Activated CD4-positive, alpha-beta T cell treated with anti-CD3 and anti-CD28 coated beads for 36 hours (primary cell): ENCODE measurements at regions of chr5 and their contacts with region 1.

Region 1: GRCh38 chr5:150846654-150847333 is 473 bp downstream of the IRGM start:
- DNase-seq: peak; percentile 82
- ATAC-seq: peak; percentile 94
- H3K4me3 Mint-ChIP-seq: peak overlapping the region; percentile 67
- H3K27ac Mint-ChIP-seq: peak overlapping the region; percentile 93
- H3K4me1 Mint-ChIP-seq: peaks cover 22% of the 10 kb centered on the region
- H3K27me3 Mint-ChIP-seq: no peaks in the 10 kb centered on the region

Region 2: DNA sequence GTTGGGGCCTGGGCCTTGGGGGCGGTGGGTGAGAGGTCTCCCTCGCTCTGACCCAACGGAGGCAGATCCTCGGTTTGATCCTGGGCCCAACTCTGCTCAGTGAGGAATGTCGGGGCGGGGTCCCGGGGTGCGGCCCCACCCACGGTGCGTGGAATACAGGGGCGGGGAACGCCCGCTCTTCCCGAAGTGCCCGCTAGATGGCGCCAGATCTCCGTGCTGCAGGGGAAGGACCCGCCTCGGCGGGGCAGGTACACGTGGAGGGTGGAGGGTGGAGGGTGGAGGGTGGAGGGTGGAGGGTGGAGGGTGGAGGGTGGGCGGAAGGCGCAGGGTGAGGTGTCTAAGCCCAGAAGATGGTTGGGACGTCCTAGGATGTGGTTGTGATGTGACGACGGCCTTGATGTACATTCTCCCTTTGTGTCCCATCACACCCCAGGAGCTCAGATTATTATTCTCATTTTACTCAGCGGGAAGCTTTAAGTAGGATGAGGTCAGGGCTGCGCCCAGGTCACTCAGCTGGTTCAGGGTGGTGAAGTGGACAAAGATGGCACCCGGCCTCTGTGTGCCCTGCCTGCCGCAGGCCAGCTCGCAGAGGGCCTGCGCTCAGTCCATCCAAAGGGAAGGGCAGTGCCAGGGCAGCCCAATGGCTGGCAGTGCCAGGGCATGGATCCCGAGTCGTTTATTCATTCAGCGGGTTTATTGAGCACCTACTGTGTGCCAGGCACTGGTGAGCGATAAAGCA is 387.8 kb before region 1 on chr5:
- CTCF ChIA-PET with region 1: interaction called, 3 read pairs
- POLR2A ChIA-PET with region 1: no interaction called
- intact Hi-C with region 1: loop called (anchors 1 kb)
- DNase-seq: peak; percentile 93
- ATAC-seq: peak; percentile 87
- H3K4me3 Mint-ChIP-seq: peak overlapping the region; percentile 49
- H3K27ac Mint-ChIP-seq: peak overlapping the region; percentile 52
- H3K4me1 Mint-ChIP-seq: peaks cover 28% of the 10 kb centered on the region
- H3K27me3 Mint-ChIP-seq: no peaks in the 10 kb centered on the region

Region 3: DNA sequence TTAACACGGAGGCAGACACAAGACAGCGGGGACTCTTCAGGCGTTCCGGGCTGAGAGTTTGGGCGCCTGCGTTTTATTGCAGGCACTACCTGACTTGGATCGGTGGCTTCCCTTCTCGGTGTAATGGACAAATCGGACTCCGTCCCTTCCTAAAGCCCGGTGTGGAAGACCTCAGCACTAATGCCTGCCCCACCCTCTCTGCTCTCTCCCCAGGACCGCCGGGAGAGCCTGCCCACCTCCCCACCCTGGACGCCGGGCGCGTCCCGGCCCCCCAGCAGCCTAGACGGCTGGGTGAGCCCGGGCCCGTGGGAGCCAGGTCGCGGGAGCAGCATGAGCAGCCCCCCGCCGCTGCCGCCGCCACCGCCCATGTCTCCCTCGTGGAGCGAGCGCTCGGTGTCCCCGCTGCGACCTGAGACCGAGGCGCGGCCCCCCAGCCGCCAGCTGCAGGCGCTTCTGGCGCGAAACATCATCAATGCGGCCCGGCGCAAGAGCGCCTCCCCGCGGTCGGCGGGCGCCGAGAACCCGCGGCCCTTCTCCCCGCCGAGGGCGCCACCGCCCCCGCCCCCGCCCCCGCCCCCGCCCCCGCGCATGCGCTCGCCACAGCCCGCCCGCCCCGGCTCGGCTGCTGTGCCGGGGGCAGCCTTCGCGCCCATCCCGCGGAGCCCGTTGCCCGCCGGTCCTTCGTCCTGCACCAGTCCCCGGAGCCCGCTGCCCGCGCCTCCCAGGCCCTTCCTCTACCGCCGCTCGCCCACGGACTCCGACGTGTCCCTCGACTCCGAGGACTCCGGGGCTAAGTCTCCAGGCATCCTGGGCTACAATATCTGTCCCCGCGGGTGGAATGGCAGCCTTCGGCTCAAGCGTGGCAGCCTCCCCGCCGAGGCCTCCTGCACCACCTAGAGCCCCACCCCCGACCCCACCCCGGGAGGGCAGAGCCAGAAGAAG is 190.3 kb before region 1 on chr5:
- CTCF ChIA-PET with region 1: interaction called, 4 read pairs
- POLR2A ChIA-PET with region 1: no interaction called
- intact Hi-C with region 1: loop called (anchors 1 to 5 kb)
- DNase-seq: peak; percentile 82
- ATAC-seq: peak; percentile 82
- H3K4me3 Mint-ChIP-seq: peak overlapping the region; percentile 63
- H3K27ac Mint-ChIP-seq: no peak overlapping the region
- H3K4me1 Mint-ChIP-seq: no peaks in the 10 kb centered on the region
- H3K27me3 Mint-ChIP-seq: no peaks in the 10 kb centered on the region

Region 4: GRCh38 chr5:150758531-150759333 is 88.1 kb before region 1 on chr5 and contains the start of gene DCTN4:
- CTCF ChIA-PET with region 1: interaction called, 8 read pairs
- POLR2A ChIA-PET with region 1: interaction called, 8 read pairs
- intact Hi-C with region 1: loop called (anchors 1 kb)
- DNase-seq: peak; percentile 96
- ATAC-seq: peak; percentile 96
- H3K4me3 Mint-ChIP-seq: no peak within 1 kb of the TSS
- H3K27ac Mint-ChIP-seq: no peak within 1 kb of the TSS
- H3K4me1 Mint-ChIP-seq: peaks cover 37% of the 10 kb centered on the region
- H3K27me3 Mint-ChIP-seq: no peaks in the 10 kb centered on the region
- total RNA-seq, gene DCTN4: 31.7 to 49.0 TPM

Region 5: GRCh38 chr5:150801117-150801927 is 45.5 kb before region 1 on chr5:
- CTCF ChIA-PET with region 1: interaction called, 45 read pairs
- POLR2A ChIA-PET with region 1: interaction called, 9 read pairs
- intact Hi-C with region 1: loop called (anchors 1 kb)
- DNase-seq: peak; percentile 26
- ATAC-seq: peak; percentile 78
- H3K4me3 Mint-ChIP-seq: no peak overlapping the region
- H3K27ac Mint-ChIP-seq: no peak overlapping the region
- H3K4me1 Mint-ChIP-seq: peaks cover 22% of the 10 kb centered on the region
- H3K27me3 Mint-ChIP-seq: no peaks in the 10 kb centered on the region